ENCODE measurements at regions of chr9 and their contacts with region 1.

Region 1: DNA sequence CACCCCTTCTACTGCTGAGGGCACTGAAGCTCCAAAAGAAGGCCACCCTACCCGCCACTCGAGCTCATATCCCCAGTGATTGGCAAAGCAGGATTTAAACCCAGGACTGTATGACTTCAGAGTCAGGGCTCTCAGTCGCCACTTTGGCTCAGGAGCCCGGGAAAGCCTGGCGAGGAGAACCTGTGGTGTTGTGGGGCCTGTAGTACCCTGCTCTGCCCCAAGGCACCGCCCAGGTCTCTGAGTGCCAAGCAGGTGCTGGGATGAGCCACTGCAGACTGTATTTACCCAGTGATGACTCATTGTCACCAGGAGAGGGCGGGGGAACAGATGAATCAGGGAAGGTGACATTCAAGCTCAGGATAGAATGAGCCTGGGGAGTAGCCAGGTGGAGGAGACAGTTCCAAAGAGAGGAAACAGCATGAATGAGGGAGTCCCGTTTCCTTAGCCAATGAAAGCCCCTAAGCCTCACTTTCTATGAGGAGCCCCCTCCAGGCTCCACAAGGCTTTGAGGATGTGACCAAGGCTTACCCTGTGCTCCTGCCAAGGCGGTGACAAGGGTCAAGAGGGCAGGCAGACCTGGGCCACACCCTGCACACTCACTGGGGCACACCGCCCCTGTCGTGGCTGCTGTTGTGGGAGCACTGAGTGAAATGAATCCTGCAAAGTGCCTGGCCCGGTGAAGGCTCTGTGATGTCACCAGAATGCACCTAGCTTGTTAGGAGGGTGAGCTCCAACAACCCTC is 17.8 kb upstream of the DPM2 start:
- DNase-seq: peak; percentile 96 to 97
- H3K4me3 ChIP-seq: peak overlapping the region; percentile 10; the same call in 1 of the 2 replicates
- H3K27ac ChIP-seq: peak overlapping the region; percentile 82
- H3K4me1 ChIP-seq: peaks cover 60% of the 10 kb centered on the region
- H3K27me3 ChIP-seq: no peaks in the 10 kb centered on the region
- CTCF ChIP-seq: peak; percentile 68

Region 2: GRCh38 chr9:127937388-127938280 is 17.8 kb before region 1 on chr9 and contains the start of gene DPM2:
- CTCF ChIA-PET with region 1: interaction called, 11 read pairs
- POLR2A ChIA-PET with region 1: no interaction called
- intact Hi-C with region 1: loop called (anchors 2 kb)
- DNase-seq: peak; percentile 74 to 77
- H3K4me3 ChIP-seq: peak within 1 kb of the TSS; percentile 83
- H3K27ac ChIP-seq: peak within 1 kb of the TSS; percentile 25; the same call in 1 of the 2 replicates
- H3K4me1 ChIP-seq: peaks cover 17% of the 10 kb centered on the region
- H3K27me3 ChIP-seq: no peaks in the 10 kb centered on the region
- CTCF ChIP-seq: no peak
- total RNA-seq, gene DPM2: 65.5 and 79.4 TPM in 2 replicates

Region 3: DNA sequence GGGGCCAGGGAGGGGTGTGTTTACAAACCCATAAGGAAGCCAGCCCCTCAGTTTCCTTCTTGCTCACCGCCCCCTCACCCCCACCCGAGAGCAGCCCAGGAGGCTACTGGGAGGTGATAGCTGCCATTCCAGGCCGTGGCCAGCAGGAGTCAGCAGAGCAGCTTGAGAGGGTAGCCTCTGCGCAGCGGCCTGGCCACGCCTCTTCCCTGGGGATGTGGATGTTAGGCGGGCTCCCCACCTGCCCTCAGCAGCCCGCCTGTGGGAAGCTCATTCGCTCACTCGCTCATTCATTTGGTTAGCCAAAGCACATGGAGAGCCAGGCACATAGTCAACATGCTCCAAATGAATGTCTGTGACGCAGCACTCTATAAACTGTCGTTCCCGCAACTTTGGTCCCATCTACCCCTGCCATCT is 11.7 kb before region 1 on chr9:
- CTCF ChIA-PET with region 1: interaction called, 11 read pairs
- POLR2A ChIA-PET with region 1: no interaction called
- intact Hi-C with region 1: no loop called
- DNase-seq: peak; percentile 61 to 80
- H3K4me3 ChIP-seq: no peak overlapping the region
- H3K27ac ChIP-seq: no peak overlapping the region
- H3K4me1 ChIP-seq: no peaks in the 10 kb centered on the region
- H3K27me3 ChIP-seq: no peaks in the 10 kb centered on the region
- CTCF ChIP-seq: peak; percentile 88

Region 4: GRCh38 chr9:127968717-127969383 is 13.4 kb after region 1 on chr9:
- CTCF ChIA-PET with region 1: interaction called, 6 read pairs
- POLR2A ChIA-PET with region 1: no interaction called
- intact Hi-C with region 1: loop called (anchors 1 kb)
- DNase-seq: peak; percentile 66 to 72
- H3K4me3 ChIP-seq: no peak overlapping the region
- H3K27ac ChIP-seq: peak overlapping the region; percentile 81
- H3K4me1 ChIP-seq: peaks cover 96% of the 10 kb centered on the region
- H3K27me3 ChIP-seq: no peaks in the 10 kb centered on the region
- CTCF ChIP-seq: no peak

Region 5: GRCh38 chr9:128494108-128494745 is 538.8 kb after region 1 on chr9:
- CTCF ChIA-PET with region 1: no interaction called
- POLR2A ChIA-PET with region 1: no interaction called
- intact Hi-C with region 1: no loop called
- DNase-seq: no peak
- H3K4me3 ChIP-seq: no peak overlapping the region
- H3K27ac ChIP-seq: no peak overlapping the region
- H3K4me1 ChIP-seq: no peaks in the 10 kb centered on the region
- H3K27me3 ChIP-seq: no peaks in the 10 kb centered on the region
- CTCF ChIP-seq: no peak

Measured in PC-9 (cell line).